GM12878 (cell line): ENCODE measurements at regions of chr10 and their contacts with region 1.

Region 1: DNA sequence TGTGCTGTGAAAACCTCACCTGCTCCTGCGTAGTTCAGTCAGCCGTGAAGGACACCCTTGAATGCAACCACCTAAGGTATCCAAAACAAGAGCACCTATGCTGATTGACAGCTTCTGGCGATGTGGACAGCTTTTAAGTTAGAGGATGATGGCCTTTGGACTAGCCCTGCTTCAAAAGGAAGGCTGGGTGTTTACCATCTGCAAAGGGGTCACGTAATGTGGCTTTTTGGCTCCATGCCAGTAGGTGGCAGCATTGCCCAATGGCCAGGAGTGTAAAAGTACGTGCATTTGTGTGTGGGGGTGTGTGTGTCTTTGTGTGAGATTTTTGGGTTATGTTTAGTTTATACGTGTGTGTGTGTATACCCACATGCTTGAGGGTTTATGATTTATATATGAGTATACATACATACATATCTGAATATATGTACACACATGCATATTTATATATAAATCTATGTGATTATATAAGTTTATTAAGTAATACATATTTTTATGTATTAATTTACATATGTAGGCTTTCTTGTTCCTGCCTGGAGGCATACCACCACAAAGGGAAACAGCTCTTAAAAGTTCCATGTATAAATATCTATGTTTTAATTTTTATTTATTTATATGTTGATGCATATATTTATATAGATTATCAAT is 236.3 kb upstream of the ANKRD30A start:
- DNase-seq: no peak
- ATAC-seq: peak; percentile 84
- H3K4me3 ChIP-seq: no peak overlapping the region
- H3K27ac ChIP-seq: no peak overlapping the region
- H3K4me1 ChIP-seq: no peaks in the 10 kb centered on the region
- H3K27me3 ChIP-seq: no peaks in the 10 kb centered on the region
- CTCF ChIP-seq: peak; percentile 72 to 77 (median 73)
- EP300 ChIP-seq: no peak
- POLR2A ChIP-seq: no peak
- RAD21 ChIP-seq: peak; percentile 77

Region 2: DNA sequence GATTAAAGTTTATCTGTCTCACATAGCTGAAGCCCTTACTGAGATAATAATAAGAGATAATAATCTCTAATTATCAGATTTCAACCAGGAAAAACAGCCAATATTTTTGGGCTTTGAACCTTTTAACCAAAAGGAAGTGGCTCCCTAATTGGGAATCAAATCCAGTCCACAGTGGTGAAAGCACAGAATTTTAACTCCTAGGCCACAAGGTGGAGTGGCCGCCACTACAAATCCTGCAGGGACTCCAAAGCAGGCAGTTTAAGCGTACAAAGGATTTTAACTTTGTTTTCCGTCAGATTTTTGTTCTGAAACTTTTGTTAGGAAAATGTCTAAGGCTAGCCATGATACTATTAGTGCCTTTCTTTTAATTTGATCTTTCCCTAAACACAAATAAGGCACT is 1652.3 kb before region 1 on chr10:
- CTCF ChIA-PET with region 1: no interaction called
- POLR2A ChIA-PET with region 1: no interaction called
- RAD21 ChIA-PET with region 1: no interaction called
- SMC1A ChIA-PET with region 1: no interaction called
- in situ Hi-C with region 1: loop called (anchors 25 kb)
- intact Hi-C with region 1: no loop called
- DNase-seq: no peak
- ATAC-seq: no peak
- H3K4me3 ChIP-seq: no peak overlapping the region
- H3K27ac ChIP-seq: no peak overlapping the region
- H3K4me1 ChIP-seq: no peaks in the 10 kb centered on the region
- H3K27me3 ChIP-seq: no peaks in the 10 kb centered on the region
- CTCF ChIP-seq: peak in 2 of 3 experiments; percentile 15 to 28; a peak in 2 of 6 replicates
- EP300 ChIP-seq: no peak
- POLR2A ChIP-seq: no peak
- RAD21 ChIP-seq: peak; percentile 46

Region 3: DNA sequence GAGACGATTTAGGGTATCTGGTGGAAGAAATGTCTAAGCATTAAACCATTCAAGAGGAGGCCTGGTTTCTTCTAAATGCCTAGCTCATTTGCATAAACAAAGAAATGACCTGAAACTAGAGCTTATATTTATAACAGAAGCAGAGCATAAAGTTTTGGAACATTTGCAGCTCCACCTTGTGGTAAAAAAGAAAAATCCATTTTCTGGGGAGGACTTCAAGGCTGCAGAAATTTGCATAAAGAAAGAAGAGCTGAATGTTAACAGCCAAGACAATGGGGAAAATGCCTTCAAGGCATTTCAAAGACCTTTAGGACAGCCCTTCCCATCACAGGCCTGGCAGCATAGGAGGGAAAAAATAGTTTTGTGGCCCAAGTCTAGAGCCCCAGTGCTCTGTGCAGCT is 606.4 kb after region 1 on chr10:
- CTCF ChIA-PET with region 1: interaction called, 26 read pairs
- POLR2A ChIA-PET with region 1: no interaction called
- RAD21 ChIA-PET with region 1: interaction called, 12 read pairs
- SMC1A ChIA-PET with region 1: interaction called, 5 read pairs
- in situ Hi-C with region 1: no loop called
- intact Hi-C with region 1: no loop called
- DNase-seq: no peak
- ATAC-seq: no peak
- H3K4me3 ChIP-seq: no peak overlapping the region
- H3K27ac ChIP-seq: no peak overlapping the region
- H3K4me1 ChIP-seq: no peaks in the 10 kb centered on the region
- H3K27me3 ChIP-seq: no peaks in the 10 kb centered on the region
- CTCF ChIP-seq: 0 out of 6 replicates have a peak, but pooled peaks of 1 of the 3 experiments have one; percentile 8
- EP300 ChIP-seq: no peak
- POLR2A ChIP-seq: no peak
- RAD21 ChIP-seq: 0 out of 2 replicates have a peak, but pooled peaks have one; percentile 20

Region 4: GRCh38 chr10:37937864-37938263 is 1048.8 kb after region 1 on chr10:
- CTCF ChIA-PET with region 1: no interaction called
- POLR2A ChIA-PET with region 1: no interaction called
- RAD21 ChIA-PET with region 1: no interaction called
- SMC1A ChIA-PET with region 1: no interaction called
- in situ Hi-C with region 1: loop called (anchors 25 kb)
- intact Hi-C with region 1: no loop called
- DNase-seq: no peak
- ATAC-seq: no peak
- H3K4me3 ChIP-seq: no peak overlapping the region
- H3K27ac ChIP-seq: no peak overlapping the region
- H3K4me1 ChIP-seq: no peaks in the 10 kb centered on the region
- H3K27me3 ChIP-seq: no peaks in the 10 kb centered on the region
- CTCF ChIP-seq: no peak
- EP300 ChIP-seq: no peak
- POLR2A ChIP-seq: no peak
- RAD21 ChIP-seq: no peak